Thyroid gland (tissue), 4 donors: ENCODE measurements at regions of chr15 and their contacts with region 1.

Region 1: GRCh38 chr15:34367101-34368081 is at the start of gene LPCAT4:
- DNase-seq: peak; percentile 90 to 92
- H3K4me3 ChIP-seq: peak within 1 kb of the TSS; percentile 45 to 99 (median 93)
- H3K27ac ChIP-seq: peak within 1 kb of the TSS; percentile 91 to 97 (median 95)
- H3K4me1 ChIP-seq: peaks cover 8 to 13% of the 10 kb centered on the region in 2 donors
- H3K27me3 ChIP-seq: no peaks in the 10 kb centered on the region
- CTCF ChIP-seq: peak; percentile 69 to 98 (median 94)
- POLR2A ChIP-seq: peak in 1 of 2 donors; percentile 84
- total RNA-seq, gene LPCAT4: 6.9 to 12.1 (median 8.6) TPM

Region 2: GRCh38 chr15:33737687-33738601 is 629.4 kb before region 1 on chr15:
- intact Hi-C with region 1: no loop called
- DNase-seq: peak; percentile 21 to 22
- H3K4me3 ChIP-seq: no peak overlapping the region
- H3K27ac ChIP-seq: no peak overlapping the region
- H3K4me1 ChIP-seq: no peaks in the 10 kb centered on the region
- H3K27me3 ChIP-seq: no peaks in the 10 kb centered on the region
- CTCF ChIP-seq: peak; percentile 33 to 83 (median 62)
- POLR2A ChIP-seq: no peak

Region 3: GRCh38 chr15:34101366-34102175 is 265.8 kb before region 1 on chr15 and contains the starts of genes EMC7 and PGBD4:
- intact Hi-C with region 1: loop called (anchors 10 kb)
- DNase-seq: peak; percentile 99
- H3K4me3 ChIP-seq: peak within 1 kb of the TSS; percentile 74 to 87 (median 76)
- H3K27ac ChIP-seq: peak within 1 kb of the TSS; percentile 44 to 84 (median 67)
- H3K4me1 ChIP-seq: peaks cover 7 to 12% of the 10 kb centered on the region in 2 donors
- H3K27me3 ChIP-seq: no peaks in the 10 kb centered on the region
- CTCF ChIP-seq: peak in 1 of 6 experiments; percentile 32
- POLR2A ChIP-seq: peak in 1 of 2 donors; percentile 84
- total RNA-seq, gene EMC7: 40.9 to 54.3 (median 50.5) TPM
- total RNA-seq, gene PGBD4: 1.0 to 1.3 (median 1.2) TPM

Region 4: DNA sequence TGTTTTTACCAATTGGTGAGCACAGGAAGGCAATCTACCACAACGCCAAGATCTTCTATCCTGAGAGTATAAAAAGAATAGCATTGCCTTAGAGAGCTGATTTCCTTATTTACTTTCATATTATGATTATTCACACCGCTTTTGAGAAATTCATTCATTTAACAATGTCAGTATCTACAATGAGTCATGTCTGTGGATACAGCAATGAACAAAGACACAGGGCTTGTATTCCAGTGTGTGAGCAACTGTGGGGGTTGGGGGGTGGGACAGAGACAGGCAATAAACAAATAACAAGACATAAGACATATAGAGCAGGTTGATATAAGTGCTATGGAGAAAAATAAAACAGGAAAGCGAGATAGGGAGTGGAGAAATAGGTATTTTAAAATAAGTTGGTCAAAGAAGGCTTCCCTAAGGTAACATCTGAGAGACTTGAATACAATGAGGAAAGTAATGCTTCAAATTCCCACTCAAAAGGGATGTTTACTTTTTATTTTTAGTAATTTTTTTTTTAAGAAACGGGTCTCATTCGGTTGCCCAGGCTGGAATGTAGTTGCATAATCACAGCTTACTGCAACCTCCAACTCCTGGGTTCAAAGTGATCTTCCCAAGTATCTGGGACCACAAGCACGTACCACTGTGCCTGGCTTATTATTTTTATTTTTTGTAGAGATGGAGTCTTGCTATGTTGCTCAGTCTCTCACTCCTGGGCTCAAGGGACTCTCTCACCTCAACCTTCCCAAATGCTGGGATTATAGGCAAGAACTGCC is 219.8 kb before region 1 on chr15:
- intact Hi-C with region 1: no loop called
- DNase-seq: no peak
- H3K4me3 ChIP-seq: no peak overlapping the region
- H3K27ac ChIP-seq: no peak overlapping the region
- H3K4me1 ChIP-seq: no peaks in the 10 kb centered on the region
- H3K27me3 ChIP-seq: no peaks in the 10 kb centered on the region
- CTCF ChIP-seq: no peak
- POLR2A ChIP-seq: no peak

Region 5: DNA sequence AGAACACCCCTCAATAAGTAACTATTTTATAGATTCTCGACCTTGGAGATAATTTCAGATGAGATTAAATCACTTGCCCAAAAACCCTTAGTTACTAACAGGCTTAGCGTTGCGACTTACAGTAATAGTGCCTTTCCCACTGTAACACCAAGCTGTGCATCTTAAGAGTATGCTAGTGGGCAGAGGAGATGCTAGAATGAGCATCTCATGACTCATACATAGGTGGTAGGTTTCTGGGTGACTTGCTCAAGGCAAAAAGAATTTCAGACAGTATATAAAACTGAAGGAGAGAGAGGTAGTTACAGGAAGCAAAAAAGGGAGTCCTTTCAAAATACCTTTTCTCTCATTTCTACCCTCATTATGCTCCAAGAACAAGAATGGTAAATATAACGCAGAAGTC is 161.4 kb before region 1 on chr15:
- intact Hi-C with region 1: no loop called
- DNase-seq: no peak
- H3K4me3 ChIP-seq: no peak overlapping the region
- H3K27ac ChIP-seq: no peak overlapping the region
- H3K4me1 ChIP-seq: peaks cover 8 to 9% of the 10 kb centered on the region in 2 donors
- H3K27me3 ChIP-seq: no peaks in the 10 kb centered on the region
- CTCF ChIP-seq: no peak
- POLR2A ChIP-seq: no peak

Region 6: DNA sequence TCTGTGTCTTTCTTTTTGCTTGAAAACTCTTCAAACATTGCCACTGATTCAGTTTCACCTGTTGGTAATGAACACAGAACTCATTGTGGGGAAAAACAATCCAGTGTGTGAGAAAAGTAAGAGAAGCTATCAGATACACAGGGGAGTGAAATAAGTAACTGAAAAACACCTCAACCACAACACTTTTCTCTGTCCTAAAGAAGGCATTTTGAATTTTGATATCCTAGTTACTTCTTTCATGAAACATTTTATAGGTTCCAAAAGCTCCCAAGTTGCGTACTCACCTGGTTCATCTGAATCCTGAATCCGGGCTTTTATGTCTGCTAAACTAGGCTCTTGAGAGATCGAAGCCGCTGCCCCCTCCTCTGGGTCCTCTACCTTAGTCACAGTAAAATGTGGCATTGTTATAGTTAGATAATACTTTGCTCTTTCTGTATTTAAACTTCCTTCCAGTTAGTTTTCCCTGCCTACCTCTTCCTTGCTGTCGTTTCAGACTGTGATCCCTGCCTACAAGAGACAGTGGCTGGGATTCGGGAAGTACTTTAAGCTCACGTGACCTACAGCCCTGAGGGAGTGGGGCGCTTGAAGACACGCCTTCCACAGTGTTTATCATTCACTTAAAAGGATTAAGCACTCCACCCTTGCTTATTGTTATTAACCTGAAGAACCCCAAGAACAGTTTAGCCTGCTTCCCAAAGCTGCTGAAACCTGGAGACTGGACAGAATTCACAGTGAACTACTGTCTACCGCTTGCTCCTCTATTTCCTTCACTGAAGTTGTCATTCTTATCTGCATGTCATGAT is 48.9 kb before region 1 on chr15:
- intact Hi-C with region 1: loop called (anchors 10 kb)
- DNase-seq: peak; percentile 79
- H3K4me3 ChIP-seq: peak overlapping the region in 2 of 3 donors; percentile 39 to 41
- H3K27ac ChIP-seq: peak overlapping the region; percentile 68 to 86 (median 78)
- H3K4me1 ChIP-seq: peaks cover 9 to 40% of the 10 kb centered on the region in 2 donors
- H3K27me3 ChIP-seq: no peaks in the 10 kb centered on the region
- CTCF ChIP-seq: no peak
- POLR2A ChIP-seq: peak in 1 of 2 donors; percentile 89

Region 7: GRCh38 chr15:34587717-34588674 is 220.6 kb after region 1 on chr15:
- intact Hi-C with region 1: loop called (anchors 5 kb)
- DNase-seq: peak; percentile 70 to 76
- H3K4me3 ChIP-seq: no peak overlapping the region
- H3K27ac ChIP-seq: no peak overlapping the region
- H3K4me1 ChIP-seq: peaks cover 0 to 6% of the 10 kb centered on the region in 2 donors
- H3K27me3 ChIP-seq: no peaks in the 10 kb centered on the region
- CTCF ChIP-seq: peak; percentile 46 to 95 (median 84)
- POLR2A ChIP-seq: peak in 1 of 2 donors; percentile 73